ENCODE measurements at regions of chr1 and their contacts with region 1.

Region 1: GRCh38 chr1:147084273-147085096 is 87.8 kb downstream of the PRKAB2 start:
- DNase-seq: peak; percentile 68 to 97
- H3K4me3 ChIP-seq: peak overlapping the region; percentile 61
- H3K27ac ChIP-seq: peak overlapping the region; percentile 93
- H3K4me1 ChIP-seq: 0 out of 2 replicates have a peak, but pooled peaks cover 6% of the 10 kb centered on the region
- H3K27me3 ChIP-seq: 0 out of 2 replicates have a peak, but pooled peaks cover 4% of the 10 kb centered on the region
- CTCF ChIP-seq: no peak

Region 2: GRCh38 chr1:147242439-147243227 is 158.1 kb after region 1 on chr1 and contains the start of gene CHD1L:
- CTCF ChIA-PET with region 1: no interaction called
- POLR2A ChIA-PET with region 1: interaction called, 21 read pairs
- intact Hi-C with region 1: loop called (anchors 2 kb)
- DNase-seq: peak; percentile 86 to 95
- H3K4me3 ChIP-seq: peak within 1 kb of the TSS; percentile 74
- H3K27ac ChIP-seq: peak within 1 kb of the TSS; percentile 54
- H3K4me1 ChIP-seq: peaks cover 40% of the 10 kb centered on the region
- H3K27me3 ChIP-seq: no peaks in the 10 kb centered on the region
- CTCF ChIP-seq: peak; percentile 73
- total RNA-seq, gene CHD1L: 31.7 and 31.8 TPM in 2 replicates